Right ventricle myocardium inferior (tissue), 1 donor: ENCODE measurements at regions of chr17 and their contacts with region 1.

Region 1: DNA sequence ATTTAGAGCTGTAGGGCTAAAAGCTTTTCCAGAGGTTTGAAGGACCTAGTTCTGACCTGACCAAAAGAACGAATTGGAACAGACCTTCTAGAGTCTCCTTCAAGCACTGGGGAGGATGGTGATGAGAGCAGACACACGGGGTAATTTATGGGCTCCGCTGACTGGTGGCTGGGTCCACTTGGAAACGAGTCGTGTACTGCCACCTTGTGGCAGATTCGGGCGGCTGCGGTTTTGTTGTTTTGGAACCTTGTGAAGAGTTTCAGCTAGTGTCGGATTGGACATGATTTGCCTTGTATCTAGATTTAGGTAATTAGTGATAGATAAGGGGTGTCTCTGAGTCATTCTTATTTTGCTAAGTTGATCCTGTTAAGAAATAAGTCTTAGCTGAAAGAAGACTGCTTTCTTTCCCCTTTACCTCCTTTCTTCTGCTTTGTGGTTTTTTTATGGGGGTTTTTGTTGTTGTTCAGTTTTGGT is 98.9 kb downstream of the AATF start:
- DNase-seq: peak; percentile 83
- ATAC-seq: peak; percentile 64

Region 2: DNA sequence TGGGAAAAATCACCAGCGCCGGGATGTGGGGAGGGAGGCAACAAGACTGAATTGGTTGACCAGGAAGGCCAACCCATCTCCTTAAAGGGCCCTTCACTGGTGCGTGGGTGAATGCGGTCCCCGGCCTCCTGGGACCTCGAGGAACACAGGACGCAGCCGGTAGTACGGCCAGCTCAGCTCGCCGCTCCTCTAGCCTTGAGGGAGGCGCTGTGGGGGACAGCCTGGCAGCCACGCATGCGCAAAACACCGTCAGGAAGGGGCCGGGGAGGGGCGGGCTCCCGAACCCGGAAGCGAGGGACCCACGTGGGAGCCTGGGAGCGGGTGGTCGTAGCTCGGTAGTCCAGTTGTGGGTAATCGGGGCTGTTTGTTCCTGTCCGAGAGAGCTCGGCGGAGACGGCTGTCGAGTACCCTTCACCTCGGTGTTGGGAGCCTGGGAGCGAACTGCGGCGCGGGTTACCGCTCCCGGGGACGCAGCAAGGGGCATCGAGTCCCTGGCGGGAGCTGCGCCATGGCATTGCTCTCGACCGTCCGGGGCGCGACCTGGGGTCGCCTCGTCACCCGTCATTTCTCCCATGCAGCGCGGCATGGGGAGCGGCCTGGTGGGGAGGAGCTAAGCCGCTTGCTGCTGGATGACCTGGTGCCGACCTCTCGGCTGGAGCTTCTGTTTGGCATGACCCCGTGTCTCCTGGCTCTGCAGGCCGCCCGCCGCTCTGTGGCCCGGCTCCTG is 446.2 kb before region 1 on chr17 and contains the start of gene MRM1:
- intact Hi-C with region 1: loop called (anchors 5 kb)
- DNase-seq: peak; percentile 96
- ATAC-seq: peak; percentile 95
- total RNA-seq, gene MRM1: 9.4 TPM

Region 3: DNA sequence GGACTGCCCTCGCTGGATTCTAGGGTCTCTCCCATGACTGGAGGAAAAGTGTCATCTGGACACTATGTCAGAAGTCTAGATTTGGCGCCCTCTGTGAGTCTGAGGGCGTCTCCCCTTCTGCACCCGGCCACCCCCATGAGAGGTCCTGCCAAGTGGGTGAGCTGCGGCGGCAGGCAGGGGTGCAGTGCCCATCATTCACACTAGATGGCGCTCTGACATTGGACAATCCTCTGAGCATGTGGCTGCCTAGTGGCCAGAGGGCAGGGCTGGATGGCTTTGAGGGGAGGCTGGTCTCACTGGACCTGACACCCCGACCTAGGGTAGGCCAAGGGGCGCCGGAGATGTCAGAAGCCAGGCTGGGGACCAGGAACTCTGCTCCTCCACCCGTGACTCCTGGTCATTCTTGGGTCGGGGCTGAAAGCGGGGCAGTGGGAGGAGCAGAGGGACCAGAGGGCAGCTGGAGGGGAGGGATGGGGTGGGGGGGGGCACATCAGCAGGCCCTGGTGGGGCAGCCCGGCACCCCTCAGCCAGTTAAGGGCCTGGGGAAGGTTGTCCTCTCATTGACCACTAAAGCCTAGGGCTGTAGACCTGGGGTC is 418.3 kb before region 1 on chr17:
- intact Hi-C with region 1: loop called (anchors 1 kb)
- DNase-seq: peak; percentile 77
- ATAC-seq: peak; percentile 81

Region 4: DNA sequence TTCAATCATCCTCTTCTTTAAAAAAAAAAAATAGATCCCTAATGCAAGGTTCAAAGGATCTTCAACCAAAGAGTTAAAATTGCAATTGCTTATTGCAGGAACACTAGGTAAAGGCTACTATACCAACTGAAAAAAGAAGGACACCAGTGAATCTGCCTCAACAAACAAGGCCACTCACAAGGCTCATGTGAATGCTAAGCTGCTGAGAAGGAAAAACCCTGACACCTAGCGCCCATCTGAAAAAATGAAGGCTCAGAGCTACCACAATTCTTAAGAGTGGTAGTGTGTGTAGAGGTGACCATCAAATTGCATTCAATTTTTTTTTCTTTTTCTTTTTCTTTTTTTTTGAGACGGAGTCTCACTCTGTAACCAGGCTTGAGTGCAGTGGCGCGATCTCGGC is 126.5 kb after region 1 on chr17:
- intact Hi-C with region 1: no loop called
- DNase-seq: no peak
- ATAC-seq: no peak